ENCODE measurements at regions of chr19 and their contacts with region 1.

Region 1: DNA sequence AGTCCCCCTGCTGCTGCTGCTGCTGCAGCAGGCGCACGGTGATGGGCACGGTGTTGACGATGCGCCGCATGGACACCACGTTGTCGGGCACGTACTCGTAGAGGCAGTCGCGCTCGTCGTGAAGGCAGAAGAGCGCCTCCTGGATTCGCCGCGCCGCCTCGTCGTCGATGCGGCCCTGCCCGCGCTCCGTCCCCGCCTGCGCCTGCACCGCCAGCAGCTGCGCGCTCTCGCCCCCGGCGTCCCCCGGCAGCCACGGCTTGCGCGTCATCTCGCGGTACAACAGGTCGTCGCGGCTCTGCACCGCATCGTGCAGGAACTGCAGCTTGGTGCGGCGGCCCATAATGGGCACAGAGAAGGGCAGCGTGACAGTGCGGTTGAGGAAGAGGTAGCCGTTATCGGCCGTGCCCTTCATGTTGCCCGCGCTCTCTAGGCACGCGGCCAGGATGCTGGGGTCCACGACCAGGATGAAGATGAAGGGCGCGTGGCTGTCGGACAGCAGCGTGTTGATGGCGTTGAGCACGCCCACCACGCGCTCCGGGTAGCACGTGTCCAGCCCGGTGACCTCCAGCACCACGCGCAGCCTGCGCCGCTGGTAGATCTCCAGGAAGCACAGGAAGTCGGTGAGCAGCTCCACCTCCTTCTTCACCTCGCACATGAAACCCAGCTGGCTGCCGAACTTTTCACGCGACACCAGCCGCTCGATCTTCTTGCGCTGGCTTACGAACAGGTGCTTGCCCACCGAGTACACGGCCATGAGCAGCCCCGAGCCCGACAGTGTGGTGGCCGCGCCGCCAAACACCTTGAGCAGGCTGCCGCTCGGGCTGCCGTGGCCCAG is 8.1 kb downstream of the NKPD1 start:
- DNase-seq: no peak
- H3K4me3 ChIP-seq: no peak overlapping the region
- H3K27ac ChIP-seq: no peak overlapping the region
- H3K4me1 ChIP-seq: peaks cover 47% of the 10 kb centered on the region
- H3K27me3 ChIP-seq: no peaks in the 10 kb centered on the region
- CTCF ChIP-seq: no peak

Region 2: DNA sequence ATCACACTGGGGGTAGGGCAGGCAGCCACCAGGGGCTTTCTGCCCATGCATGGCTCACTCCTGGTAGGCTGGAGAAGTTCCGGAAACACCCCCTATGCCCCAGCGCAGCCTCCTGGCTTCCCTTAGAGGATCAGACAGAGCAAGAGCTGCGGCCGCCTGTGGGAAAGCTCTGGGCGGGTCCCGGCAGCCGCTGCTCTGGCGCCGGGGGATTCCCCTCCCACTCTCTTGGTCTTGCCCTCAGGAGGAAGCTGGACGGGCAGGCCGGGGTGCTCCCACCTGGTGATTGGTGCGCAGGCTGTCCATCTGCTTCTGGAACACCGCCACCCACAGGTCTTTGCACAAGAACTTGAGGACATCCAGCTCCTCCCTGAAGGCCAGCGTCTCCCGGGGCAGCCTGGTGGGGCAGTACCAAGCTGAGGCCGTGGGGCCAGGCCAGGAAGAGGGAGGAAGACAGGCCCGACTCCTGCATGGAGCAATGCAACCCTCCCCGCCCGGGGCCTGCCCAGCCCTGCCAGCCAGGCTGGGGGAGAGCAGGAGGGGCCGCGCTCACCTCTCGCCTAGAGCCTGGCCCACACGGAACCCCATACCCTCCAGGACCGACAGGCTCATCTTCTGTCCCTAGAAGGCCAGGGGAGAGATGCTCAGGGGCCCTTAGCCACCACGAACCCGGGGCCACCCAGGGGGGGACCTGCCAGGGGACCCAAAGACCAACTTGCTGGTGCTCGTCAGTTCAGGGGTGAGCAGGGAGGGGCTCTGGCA is 12.0 kb after region 1 on chr19:
- CTCF ChIA-PET with region 1: interaction called, 10 read pairs
- POLR2A ChIA-PET with region 1: no interaction called
- intact Hi-C with region 1: no loop called
- DNase-seq: peak; percentile 82 to 84
- H3K4me3 ChIP-seq: no peak overlapping the region
- H3K27ac ChIP-seq: no peak overlapping the region
- H3K4me1 ChIP-seq: peaks cover 18% of the 10 kb centered on the region
- H3K27me3 ChIP-seq: no peaks in the 10 kb centered on the region
- CTCF ChIP-seq: no peak; the same call in 1 of the 2 replicates

Region 3: GRCh38 chr19:45178262-45179071 is 25.7 kb after region 1 on chr19 and contains the start of gene BLOC1S3:
- CTCF ChIA-PET with region 1: no interaction called
- POLR2A ChIA-PET with region 1: no interaction called
- intact Hi-C with region 1: loop called (anchors 1 kb)
- DNase-seq: peak; percentile 100
- H3K4me3 ChIP-seq: peak within 1 kb of the TSS; percentile 86
- H3K27ac ChIP-seq: peak within 1 kb of the TSS; percentile 84
- H3K4me1 ChIP-seq: peaks cover 39% of the 10 kb centered on the region
- H3K27me3 ChIP-seq: no peaks in the 10 kb centered on the region
- CTCF ChIP-seq: peak; percentile 61
- total RNA-seq, gene BLOC1S3: 11.5 and 17.8 TPM in 2 replicates

Region 4: GRCh38 chr19:45283443-45284033 is 130.8 kb after region 1 on chr19:
- CTCF ChIA-PET with region 1: no interaction called
- POLR2A ChIA-PET with region 1: interaction called, 27 read pairs
- intact Hi-C with region 1: no loop called
- DNase-seq: no peak
- H3K4me3 ChIP-seq: no peak overlapping the region
- H3K27ac ChIP-seq: no peak overlapping the region
- H3K4me1 ChIP-seq: no peaks in the 10 kb centered on the region
- H3K27me3 ChIP-seq: no peaks in the 10 kb centered on the region
- CTCF ChIP-seq: no peak